Activated B cell treated with CpG ODN at 0.5 μM for 24 hours (primary cell): ENCODE measurements at regions of chr7 and their contacts with region 1.

Region 1: GRCh38 chr7:94050046-94050445 is 45.9 kb upstream of the BET1 start:
- DNase-seq: peak; percentile 44
- ATAC-seq: peak; percentile 87
- H3K4me3 Mint-ChIP-seq: peak overlapping the region; percentile 71
- H3K27ac Mint-ChIP-seq: peak overlapping the region; percentile 97
- H3K4me1 Mint-ChIP-seq: peaks cover 77% of the 10 kb centered on the region
- H3K27me3 Mint-ChIP-seq: no peaks in the 10 kb centered on the region
- CTCF ChIP-seq: no peak

Region 2: DNA sequence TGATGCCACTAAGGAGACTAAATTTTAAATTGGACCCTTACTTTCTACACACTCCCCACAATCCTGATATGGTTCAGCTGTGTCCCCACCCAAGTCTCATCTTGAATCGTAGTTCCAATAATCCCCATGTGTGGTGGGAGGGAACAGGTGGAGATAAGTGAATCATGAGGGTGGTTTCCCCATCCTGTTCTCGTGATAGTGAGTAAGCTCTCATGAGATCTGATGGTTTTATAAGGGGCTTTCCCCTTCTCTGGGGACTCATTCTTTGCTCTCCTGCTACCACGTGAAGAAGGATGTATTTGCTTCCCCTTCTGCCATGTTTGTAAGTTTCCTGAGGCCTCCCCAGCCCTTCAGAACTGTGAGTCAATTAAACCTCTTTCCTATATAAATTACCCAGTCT is 27.5 kb before region 1 on chr7:
- CTCF ChIA-PET with region 1: no interaction called
- POLR2A ChIA-PET with region 1: interaction called, 4 read pairs
- intact Hi-C with region 1: loop called (anchors 2 kb)
- DNase-seq: no peak
- ATAC-seq: peak; percentile 84
- H3K4me3 Mint-ChIP-seq: peak overlapping the region; percentile 62
- H3K27ac Mint-ChIP-seq: peak overlapping the region; percentile 92
- H3K4me1 Mint-ChIP-seq: peaks cover 23% of the 10 kb centered on the region
- H3K27me3 Mint-ChIP-seq: no peaks in the 10 kb centered on the region
- CTCF ChIP-seq: no peak

Region 3: DNA sequence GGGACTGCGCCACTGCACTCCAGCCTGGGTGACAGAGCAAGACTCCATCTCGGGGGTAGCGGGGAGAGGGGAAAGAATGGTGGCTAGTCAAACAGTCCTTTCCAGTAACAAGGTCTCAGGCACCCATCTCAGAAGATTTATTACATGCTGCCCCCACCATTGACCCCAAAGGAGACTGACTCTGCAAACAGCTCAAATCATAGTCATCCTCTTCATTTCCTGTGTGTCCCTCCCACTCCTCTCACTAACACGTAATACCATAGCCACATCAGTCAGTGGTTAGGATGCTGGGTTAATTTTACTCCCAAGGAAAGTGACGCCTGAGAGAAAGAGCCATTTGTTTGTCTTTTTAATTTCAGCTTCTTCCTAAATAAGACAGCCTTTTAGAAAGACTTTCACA is 10.7 kb after region 1 on chr7:
- CTCF ChIA-PET with region 1: no interaction called
- POLR2A ChIA-PET with region 1: no interaction called
- intact Hi-C with region 1: loop called (anchors 1 kb)
- DNase-seq: no peak
- ATAC-seq: no peak
- H3K4me3 Mint-ChIP-seq: no peak overlapping the region
- H3K27ac Mint-ChIP-seq: no peak overlapping the region
- H3K4me1 Mint-ChIP-seq: peaks cover 32% of the 10 kb centered on the region
- H3K27me3 Mint-ChIP-seq: no peaks in the 10 kb centered on the region
- CTCF ChIP-seq: no peak

Region 4: DNA sequence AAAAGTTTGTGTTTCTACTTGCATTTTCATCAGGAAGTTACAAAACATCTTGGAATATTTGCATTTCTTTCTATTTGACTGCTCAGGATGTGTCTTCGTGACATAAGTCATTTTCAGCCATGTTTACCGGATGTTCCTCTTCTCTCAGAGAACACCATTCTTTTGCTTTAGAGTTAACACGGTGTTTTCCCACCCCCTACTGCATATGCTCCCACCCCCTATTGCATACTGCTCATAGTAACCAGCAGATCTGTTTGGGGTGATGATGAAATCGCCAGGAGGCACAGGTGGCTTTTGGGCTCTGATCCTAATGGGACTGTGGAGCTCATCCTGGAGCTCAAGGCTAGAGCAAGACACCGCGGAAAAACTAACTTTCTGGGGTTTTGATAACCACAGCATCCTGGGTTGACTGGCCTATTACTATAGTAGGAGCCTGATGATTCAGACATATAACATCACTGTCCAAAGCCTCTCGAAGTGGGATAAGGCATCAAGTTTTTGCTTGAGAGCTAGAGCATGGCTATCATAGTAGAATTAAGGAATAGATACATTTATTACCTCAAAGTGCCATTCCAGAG is 19.2 kb after region 1 on chr7:
- CTCF ChIA-PET with region 1: no interaction called
- POLR2A ChIA-PET with region 1: interaction called, 3 read pairs
- intact Hi-C with region 1: loop called (anchors 1 kb)
- DNase-seq: no peak
- ATAC-seq: peak; percentile 83
- H3K4me3 Mint-ChIP-seq: peak overlapping the region; percentile 19
- H3K27ac Mint-ChIP-seq: peak overlapping the region; percentile 71
- H3K4me1 Mint-ChIP-seq: peaks cover 36% of the 10 kb centered on the region
- H3K27me3 Mint-ChIP-seq: no peaks in the 10 kb centered on the region
- CTCF ChIP-seq: no peak

Region 5: DNA sequence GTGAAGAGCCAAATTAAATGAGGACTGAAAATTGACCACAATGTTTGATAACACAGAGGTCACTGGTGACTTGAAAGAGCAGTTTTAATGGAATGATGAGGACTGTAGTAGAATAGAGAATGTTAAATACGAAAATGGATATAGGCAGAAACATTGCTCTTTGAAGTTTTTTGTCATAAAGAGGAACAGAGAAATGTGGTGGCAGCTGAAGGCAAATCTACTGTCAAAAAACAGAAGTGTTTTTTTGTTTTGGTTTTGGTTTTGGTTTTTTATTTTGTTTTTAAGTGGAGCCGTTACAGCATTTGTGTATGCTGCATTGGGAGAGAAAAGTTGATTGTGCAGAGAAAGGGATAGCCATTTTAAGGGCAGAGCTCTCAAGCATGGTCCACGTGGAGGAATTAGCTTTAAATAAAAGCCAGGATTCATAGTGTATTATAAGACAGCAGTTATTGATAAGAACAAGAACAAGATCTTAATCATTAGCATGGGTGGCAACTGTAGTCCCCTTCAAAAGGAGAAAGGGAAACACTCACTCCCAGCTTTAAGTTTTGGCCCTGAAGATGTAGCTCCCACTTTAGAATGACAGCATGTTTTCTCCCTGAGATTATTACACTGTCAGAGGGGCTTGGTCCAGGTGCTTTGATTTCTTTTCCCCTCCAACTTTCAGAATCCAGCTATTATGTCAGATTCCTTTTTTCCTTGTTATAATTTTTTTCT is 110.8 kb after region 1 on chr7:
- CTCF ChIA-PET with region 1: no interaction called
- POLR2A ChIA-PET with region 1: interaction called, 7 read pairs
- intact Hi-C with region 1: loop called (anchors 5 kb)
- DNase-seq: no peak
- ATAC-seq: peak; percentile 79
- H3K4me3 Mint-ChIP-seq: peak overlapping the region; percentile 78
- H3K27ac Mint-ChIP-seq: peak overlapping the region; percentile 89
- H3K4me1 Mint-ChIP-seq: peaks cover 41% of the 10 kb centered on the region
- H3K27me3 Mint-ChIP-seq: no peaks in the 10 kb centered on the region
- CTCF ChIP-seq: no peak

Region 6: GRCh38 chr7:94301024-94301586 is 251.1 kb after region 1 on chr7:
- CTCF ChIA-PET with region 1: no interaction called
- POLR2A ChIA-PET with region 1: no interaction called
- intact Hi-C with region 1: no loop called
- DNase-seq: no peak
- ATAC-seq: no peak
- H3K4me3 Mint-ChIP-seq: no peak overlapping the region
- H3K27ac Mint-ChIP-seq: no peak overlapping the region
- H3K4me1 Mint-ChIP-seq: no peaks in the 10 kb centered on the region
- H3K27me3 Mint-ChIP-seq: peaks cover 7% of the 10 kb centered on the region
- CTCF ChIP-seq: no peak

Region 7: GRCh38 chr7:95558864-95559263 is 1508.8 kb after region 1 on chr7:
- CTCF ChIA-PET with region 1: no interaction called
- POLR2A ChIA-PET with region 1: no interaction called
- intact Hi-C with region 1: no loop called
- DNase-seq: no peak
- ATAC-seq: no peak
- H3K4me3 Mint-ChIP-seq: no peak overlapping the region
- H3K27ac Mint-ChIP-seq: no peak overlapping the region
- H3K4me1 Mint-ChIP-seq: no peaks in the 10 kb centered on the region
- H3K27me3 Mint-ChIP-seq: peaks cover 2% of the 10 kb centered on the region
- CTCF ChIP-seq: no peak